Dendritic cell treated with granulocyte-macrophage colony-stimulating factor and Interleukin-4, amounts not matched to agents 40 ng/mL and 50 ng/mL, for 4 days (primary cell): ENCODE measurements at regions of chr12 and their contacts with region 1.

Region 1: GRCh38 chr12:116277393-116278278 is at the start of gene MED13L:
- H3K4me3 Mint-ChIP-seq: peak within 1 kb of the TSS; percentile 95
- H3K27ac Mint-ChIP-seq: peak within 1 kb of the TSS; percentile 97
- H3K4me1 Mint-ChIP-seq: peaks cover 48% of the 10 kb centered on the region
- H3K27me3 Mint-ChIP-seq: no peaks in the 10 kb centered on the region

Region 2: GRCh38 chr12:116172224-116172849 is 105.3 kb before region 1 on chr12:
- intact Hi-C with region 1: no loop called
- H3K4me3 Mint-ChIP-seq: peak overlapping the region; percentile 43
- H3K27ac Mint-ChIP-seq: peak overlapping the region; percentile 46
- H3K4me1 Mint-ChIP-seq: peaks cover 49% of the 10 kb centered on the region
- H3K27me3 Mint-ChIP-seq: no peaks in the 10 kb centered on the region

Region 3: DNA sequence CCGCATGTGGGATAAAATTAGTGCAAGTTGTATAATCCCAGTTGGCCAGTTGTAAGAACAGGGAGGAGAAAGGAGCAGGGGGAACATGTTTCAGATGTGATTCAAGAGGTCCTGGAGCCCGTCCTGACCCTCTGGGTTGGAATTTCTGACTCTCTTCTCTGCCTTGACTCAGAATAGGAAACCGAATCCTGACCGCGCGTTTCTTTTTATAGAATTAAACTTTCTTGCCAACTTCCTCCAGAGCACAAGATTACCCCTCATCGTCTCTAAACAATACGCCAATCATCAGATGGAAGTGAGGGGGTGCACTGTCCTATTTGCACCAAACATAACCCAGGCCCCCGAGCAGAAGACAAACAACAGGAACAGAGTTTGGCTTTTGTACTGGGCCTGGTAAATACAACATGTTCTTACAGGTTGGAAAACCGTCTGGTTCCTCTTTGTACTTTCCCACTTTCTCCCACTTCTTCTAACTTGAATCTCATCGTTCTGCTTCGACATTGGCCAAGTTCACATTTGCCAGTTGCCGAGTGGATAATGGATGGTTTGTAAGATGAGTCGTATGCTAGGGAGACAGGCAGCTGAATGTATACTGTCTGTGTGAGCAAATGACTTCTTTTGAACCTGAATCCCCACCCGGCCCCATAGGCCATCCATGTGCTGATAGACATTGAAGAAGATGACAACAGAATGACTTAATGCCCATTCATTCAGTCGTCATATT is 42.4 kb after region 1 on chr12:
- intact Hi-C with region 1: loop called (anchors 5 kb)
- H3K4me3 Mint-ChIP-seq: peak overlapping the region; percentile 60
- H3K27ac Mint-ChIP-seq: peak overlapping the region; percentile 85
- H3K4me1 Mint-ChIP-seq: peaks cover 63% of the 10 kb centered on the region
- H3K27me3 Mint-ChIP-seq: peaks cover 17% of the 10 kb centered on the region

Region 4: DNA sequence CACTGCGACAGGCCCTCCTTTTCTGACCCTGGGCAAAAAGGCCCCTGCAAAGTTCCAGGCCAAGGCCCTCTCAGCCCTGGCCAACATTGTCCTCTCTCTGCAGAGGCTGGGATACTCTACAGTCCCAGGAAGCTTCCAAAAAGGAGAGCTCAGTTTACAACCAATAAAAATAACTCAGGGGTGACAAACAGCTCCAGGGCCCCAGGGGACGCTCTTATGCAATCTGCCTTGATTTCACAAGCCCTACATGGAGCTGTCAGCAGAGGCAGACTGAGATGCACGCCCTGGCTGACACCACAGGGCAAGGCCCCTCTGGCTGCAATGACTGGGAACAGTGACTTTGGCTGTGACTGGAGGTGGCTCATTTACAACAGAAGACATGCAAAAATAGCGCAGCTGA is 128.9 kb after region 1 on chr12:
- intact Hi-C with region 1: loop called (anchors 10 kb)
- H3K4me3 Mint-ChIP-seq: no peak overlapping the region
- H3K27ac Mint-ChIP-seq: no peak overlapping the region
- H3K4me1 Mint-ChIP-seq: peaks cover 46% of the 10 kb centered on the region
- H3K27me3 Mint-ChIP-seq: peaks cover 1% of the 10 kb centered on the region

Region 5: GRCh38 chr12:116599285-116600136 is 321.9 kb after region 1 on chr12:
- intact Hi-C with region 1: loop called (anchors 2 kb)
- H3K4me3 Mint-ChIP-seq: peak overlapping the region; percentile 71
- H3K27ac Mint-ChIP-seq: peak overlapping the region; percentile 91
- H3K4me1 Mint-ChIP-seq: peaks cover 42% of the 10 kb centered on the region
- H3K27me3 Mint-ChIP-seq: peaks cover 7% of the 10 kb centered on the region